ENCODE measurements at regions of chr21 and their contacts with region 1.

Region 1: GRCh38 chr21:25607151-25608043 is at the start of gene MRPL39:
- DNase-seq: peak; percentile 92
- total RNA-seq, gene MRPL39: 40.7 TPM

Region 2: GRCh38 chr21:25639551-25640201 is 32.3 kb after region 1 on chr21:
- intact Hi-C with region 1: loop called (anchors 5 kb)
- DNase-seq: no peak

Region 3: DNA sequence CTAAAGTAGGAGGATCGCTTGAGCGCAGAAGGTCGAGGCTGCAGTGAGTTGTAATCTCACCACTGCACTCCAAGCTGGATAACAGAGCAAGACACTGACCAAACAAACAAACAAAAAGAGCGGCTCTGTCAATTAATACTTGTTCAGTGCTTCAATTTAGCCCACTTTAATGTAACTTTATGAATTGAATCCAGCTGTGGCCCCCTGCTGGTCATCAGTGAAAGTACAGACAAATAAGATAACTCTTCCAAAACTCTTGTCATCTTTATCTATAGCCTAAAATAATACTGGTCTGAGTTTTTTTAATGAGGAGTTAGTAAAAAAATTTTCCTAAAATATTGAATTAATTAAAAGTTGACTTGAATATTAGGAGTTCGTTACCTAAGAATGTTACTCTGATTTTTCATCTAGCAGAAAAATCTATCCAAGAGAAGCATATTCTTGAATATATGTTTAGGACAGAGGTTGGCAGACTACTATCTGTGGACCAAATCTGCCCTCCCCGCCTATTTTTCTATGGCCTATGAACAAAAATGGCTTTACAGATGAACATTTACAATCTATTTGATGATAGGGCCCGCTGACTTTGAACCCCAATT is 101.2 kb after region 1 on chr21:
- intact Hi-C with region 1: loop called (anchors 1 kb)
- DNase-seq: no peak

Region 4: DNA sequence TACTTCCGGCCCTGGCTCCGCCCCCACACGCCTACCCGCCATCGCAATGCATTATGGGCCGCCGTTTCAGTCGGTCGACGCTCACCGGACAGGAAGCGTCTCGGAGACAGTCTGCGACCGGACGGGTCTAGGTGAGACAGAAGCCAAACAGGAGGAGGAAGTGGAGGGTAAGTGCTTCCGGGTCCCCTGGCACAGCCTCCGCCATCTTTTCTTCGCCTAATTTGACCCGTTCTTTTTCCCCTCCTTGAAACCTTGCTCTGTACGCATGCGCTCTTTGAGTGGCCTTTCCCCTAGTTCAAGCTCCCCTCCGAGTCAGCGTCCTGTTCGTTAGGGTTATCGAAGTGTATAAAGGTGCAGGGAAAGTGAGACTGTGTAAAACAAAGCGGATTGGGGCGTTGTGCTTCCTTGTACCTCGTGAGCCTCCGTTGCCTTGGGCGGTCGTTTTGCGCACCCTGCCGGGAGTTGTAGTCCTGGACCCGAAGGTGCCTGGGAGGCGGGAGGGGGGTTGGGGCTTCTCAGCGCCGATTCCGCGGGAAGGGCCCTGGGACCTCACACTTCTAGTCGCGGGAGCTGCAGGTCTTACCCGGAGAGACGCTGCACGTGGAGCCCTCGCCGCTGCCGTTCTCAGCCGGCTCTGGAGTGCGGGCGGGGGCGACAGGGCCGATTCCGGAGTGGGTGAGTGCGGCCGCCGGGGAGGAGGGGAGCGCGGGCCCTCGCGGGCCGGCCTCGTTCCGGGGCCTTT is 127.7 kb after region 1 on chr21 and contains the starts of genes ATP5PF and GABPA:
- intact Hi-C with region 1: loop called (anchors 2 kb)
- DNase-seq: peak; percentile 98
- total RNA-seq, gene ATP5PF: 503 TPM
- total RNA-seq, gene GABPA: 13.6 TPM

Region 5: GRCh38 chr21:25801217-25802014 is 194.0 kb after region 1 on chr21:
- intact Hi-C with region 1: loop called (anchors 2 kb)
- DNase-seq: peak; percentile 89

Measured in cardiac septum (tissue), 1 donor.